PC-3 (cell line): ENCODE measurements at regions of chr9 and their contacts with region 1.

Region 1: GRCh38 chr9:77514886-77515711 is 133.0 kb downstream of the GNA14 start:
- DNase-seq: peak; percentile 75
- ATAC-seq: peak; percentile 92
- H3K4me3 ChIP-seq: no peak overlapping the region
- H3K27ac ChIP-seq: peak overlapping the region; percentile 91
- H3K4me1 ChIP-seq: peaks cover 27% of the 10 kb centered on the region
- H3K27me3 ChIP-seq: no peaks in the 10 kb centered on the region
- CTCF ChIP-seq: no peak

Region 2: GRCh38 chr9:77456829-77457437 is 58.2 kb before region 1 on chr9:
- CTCF ChIA-PET with region 1: interaction called, 3 read pairs
- POLR2A ChIA-PET with region 1: no interaction called
- intact Hi-C with region 1: loop called (anchors 2 kb)
- DNase-seq: peak; percentile 93
- ATAC-seq: peak; percentile 73
- H3K4me3 ChIP-seq: no peak overlapping the region
- H3K27ac ChIP-seq: no peak overlapping the region
- H3K4me1 ChIP-seq: no peaks in the 10 kb centered on the region; the same call in 1 of the 2 replicates
- H3K27me3 ChIP-seq: no peaks in the 10 kb centered on the region
- CTCF ChIP-seq: peak; percentile 74

Region 3: GRCh38 chr9:77495834-77496671 is 19.0 kb before region 1 on chr9:
- CTCF ChIA-PET with region 1: no interaction called
- POLR2A ChIA-PET with region 1: no interaction called
- intact Hi-C with region 1: loop called (anchors 1 kb)
- DNase-seq: peak; percentile 79
- ATAC-seq: peak; percentile 90
- H3K4me3 ChIP-seq: peak overlapping the region; percentile 9; the same call in 1 of the 2 replicates
- H3K27ac ChIP-seq: peak overlapping the region; percentile 94
- H3K4me1 ChIP-seq: peaks cover 27% of the 10 kb centered on the region
- H3K27me3 ChIP-seq: no peaks in the 10 kb centered on the region
- CTCF ChIP-seq: no peak